ENCODE measurements at regions of chr10 and their contacts with region 1.

Region 1: GRCh38 chr10:25080880-25081581 is 64.6 kb downstream of the THNSL1 start:
- DNase-seq: no peak
- ATAC-seq: peak; percentile 92

Region 2: GRCh38 chr10:24603333-24603732 is 477.7 kb before region 1 on chr10:
- intact Hi-C with region 1: no loop called
- DNase-seq: no peak
- ATAC-seq: no peak

Region 3: GRCh38 chr10:24617771-24618391 is 463.1 kb before region 1 on chr10:
- intact Hi-C with region 1: loop called (anchors 10 kb)
- DNase-seq: peak; percentile 70
- ATAC-seq: peak; percentile 69

Region 4: DNA sequence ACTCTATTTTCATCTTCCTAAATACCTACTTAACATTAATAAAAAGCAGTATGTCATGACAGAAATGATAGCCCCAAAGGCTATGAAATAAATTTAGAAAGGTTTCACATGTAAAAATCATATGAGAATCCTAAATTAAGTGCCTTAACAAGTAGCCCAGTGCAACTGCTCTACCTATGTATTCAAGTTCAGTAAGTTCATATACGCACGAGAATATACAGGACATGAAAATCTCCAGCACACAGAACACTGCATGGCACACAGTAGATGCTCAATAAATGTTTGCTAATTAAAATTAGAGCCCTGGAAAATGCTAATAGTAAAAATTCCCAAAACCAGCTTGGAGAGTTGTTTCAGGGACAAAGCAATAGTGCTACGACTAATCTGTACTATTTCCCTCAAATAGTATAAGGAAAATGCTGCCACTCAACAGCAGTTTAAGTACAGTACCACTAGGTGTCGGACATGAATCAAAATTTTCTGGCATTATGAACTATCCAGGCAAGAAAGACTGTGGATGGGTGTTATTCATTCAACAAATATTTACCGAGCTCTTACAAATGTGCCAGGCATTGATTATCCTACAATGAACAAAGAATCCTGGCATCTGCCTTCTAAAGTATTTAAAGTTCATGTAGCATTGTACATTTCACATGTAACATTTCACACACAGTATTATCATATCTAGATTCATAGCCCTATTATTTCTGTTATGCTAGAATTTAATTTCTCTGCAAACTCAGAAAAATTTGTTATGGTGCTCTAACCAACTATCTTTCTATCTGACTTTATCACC is 438.2 kb before region 1 on chr10:
- intact Hi-C with region 1: loop called (anchors 2 kb)
- DNase-seq: no peak
- ATAC-seq: peak; percentile 89

Region 5: GRCh38 chr10:24724381-24725228 is 356.4 kb before region 1 on chr10:
- intact Hi-C with region 1: loop called (anchors 5 kb)
- DNase-seq: peak; percentile 99
- ATAC-seq: peak; percentile 94

Region 6: GRCh38 chr10:25016376-25017154 is 64.5 kb before region 1 on chr10 and contains the start of gene THNSL1:
- intact Hi-C with region 1: loop called (anchors 5 kb)
- DNase-seq: peak; percentile 99
- ATAC-seq: peak; percentile 100
- total RNA-seq, gene THNSL1: 6.5 TPM

Region 7: GRCh38 chr10:25026463-25026862 is 54.6 kb before region 1 on chr10:
- intact Hi-C with region 1: loop called (anchors 2 kb)
- DNase-seq: no peak
- ATAC-seq: no peak